Heart right ventricle (tissue), 16 donors: ENCODE measurements at regions of chr2 and their contacts with region 1.

Region 1: GRCh38 chr2:216687646-216688045 is 7.7 kb downstream of the IGFBP5 start:
- DNase-seq: no peak
- ATAC-seq: no peak
- H3K4me3 ChIP-seq: no peak overlapping the region
- H3K27ac ChIP-seq: peak overlapping the region in 1 of 10 donors; percentile 2
- H3K4me1 ChIP-seq: peaks cover 11 to 90% (median 62%) of the 10 kb centered on the region in 9 donors
- H3K27me3 ChIP-seq: peaks cover 0 to 49% (median 0%) of the 10 kb centered on the region in 7 donors
- CTCF ChIP-seq: peak in 7 of 9 donors; percentile 8 to 41 (median 29)

Region 2: GRCh38 chr2:217505303-217505702 is 817.7 kb after region 1 on chr2:
- intact Hi-C with region 1: loop called in 8 of 10 experiments (anchors 2 to 5 kb)
- DNase-seq: no peak
- ATAC-seq: no peak
- H3K4me3 ChIP-seq: no peak overlapping the region
- H3K27ac ChIP-seq: no peak overlapping the region
- H3K4me1 ChIP-seq: peaks cover 0 to 6% (median 1%) of the 10 kb centered on the region in 9 donors
- H3K27me3 ChIP-seq: no peaks in the 10 kb centered on the region
- CTCF ChIP-seq: no peak

Region 3: DNA sequence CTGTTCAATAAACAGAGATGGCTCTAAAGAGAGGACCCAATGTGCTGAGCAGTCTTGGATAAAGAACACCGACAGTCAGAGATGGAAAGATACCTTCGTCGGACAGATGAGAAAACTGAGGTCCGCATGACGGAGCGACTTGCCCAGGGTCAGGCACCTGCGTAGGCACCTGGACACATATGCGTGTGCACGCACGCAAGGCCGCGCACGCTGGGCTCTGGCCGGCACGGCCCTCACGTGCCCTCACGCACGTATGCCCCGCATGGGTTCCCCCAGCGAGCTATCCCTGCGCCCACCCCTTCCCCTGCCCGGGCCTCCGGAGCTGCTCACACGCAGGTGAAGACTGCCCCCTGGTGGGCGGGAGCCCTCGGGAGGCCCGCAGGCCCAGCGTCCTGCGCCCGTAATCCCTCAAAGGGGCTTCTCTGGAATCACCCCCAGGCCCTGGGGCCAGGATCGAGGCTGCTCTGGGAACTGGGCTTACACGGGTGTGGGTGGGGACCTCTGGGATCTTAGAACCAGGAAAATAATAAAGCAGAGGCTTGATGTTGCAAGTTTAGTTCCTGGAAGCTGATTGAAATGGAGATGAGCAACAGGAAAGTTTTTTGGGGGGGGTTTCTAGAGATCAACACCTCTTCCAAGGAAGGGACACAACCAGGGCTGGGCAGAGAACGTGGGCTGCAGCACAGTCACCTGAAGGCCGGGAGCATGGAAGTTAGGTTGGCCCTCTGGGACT is 1068.9 kb after region 1 on chr2:
- intact Hi-C with region 1: loop called in 4 of 10 experiments (anchors 5 to 10 kb)
- DNase-seq: peak; percentile 72 to 78
- ATAC-seq: peak; percentile 75 to 91 (median 88)
- H3K4me3 ChIP-seq: peak overlapping the region in 6 of 10 donors; percentile 9 to 40 (median 31)
- H3K27ac ChIP-seq: no peak overlapping the region
- H3K4me1 ChIP-seq: peaks cover 5 to 22% (median 10%) of the 10 kb centered on the region in 9 donors
- H3K27me3 ChIP-seq: peaks cover 0 to 8% (median 0%) of the 10 kb centered on the region in 7 donors
- CTCF ChIP-seq: peak; percentile 90 to 99 (median 94)